ENCODE measurements at regions of chr2 and their contacts with region 1.

Region 1: DNA sequence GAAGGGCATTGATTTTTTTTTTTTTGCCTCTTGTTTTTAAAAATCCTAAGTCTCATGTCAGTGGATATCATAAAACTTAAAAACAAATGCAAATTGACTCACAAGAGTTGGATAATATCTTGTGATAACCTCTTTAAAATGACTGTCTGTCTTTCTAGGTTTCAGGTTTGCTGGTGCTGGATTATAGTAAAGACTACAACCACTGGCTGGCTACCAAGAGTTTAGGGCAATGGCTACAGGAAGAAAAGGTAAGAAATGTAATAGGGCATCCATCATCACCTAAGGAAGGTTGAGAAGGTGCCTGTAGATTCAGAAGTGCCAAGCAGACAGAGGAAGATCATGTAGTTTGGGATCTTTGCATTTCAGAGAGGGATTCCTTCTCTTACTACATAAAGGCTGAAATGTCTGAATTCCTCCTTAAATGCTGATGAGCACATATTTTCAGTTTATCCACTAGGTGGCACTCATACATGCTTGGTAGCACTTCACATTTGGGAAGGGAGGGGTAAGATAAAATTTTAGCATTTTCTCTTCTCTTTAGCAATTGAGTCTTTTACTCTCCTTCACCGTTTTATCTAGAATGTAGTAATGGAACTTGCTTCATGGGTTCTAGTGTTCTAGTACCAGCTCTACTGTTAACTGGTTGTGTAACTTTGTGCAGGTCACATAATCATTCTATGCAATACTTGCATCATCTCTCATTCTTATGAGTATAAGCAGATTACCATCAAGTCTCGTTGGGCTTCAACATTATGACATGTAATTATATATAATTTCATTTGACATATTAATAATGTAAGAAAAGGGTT is 21.1 kb downstream of the CPS1 start:
- DNase-seq: peak; percentile 1
- ATAC-seq: peak; percentile 93
- H3K4me3 ChIP-seq: no peak overlapping the region
- H3K27ac ChIP-seq: no peak overlapping the region
- H3K4me1 ChIP-seq: no peaks in the 10 kb centered on the region
- H3K27me3 ChIP-seq: no peaks in the 10 kb centered on the region
- CTCF ChIP-seq: peak; percentile 67 to 78 (median 75)
- EP300 ChIP-seq: no peak
- POLR2A ChIP-seq: no peak
- RAD21 ChIP-seq: peak; percentile 67

Region 2: GRCh38 chr2:209864716-209865295 is 712.7 kb before region 1 on chr2:
- CTCF ChIA-PET with region 1: no interaction called
- POLR2A ChIA-PET with region 1: no interaction called
- RAD21 ChIA-PET with region 1: no interaction called
- SMC1A ChIA-PET with region 1: no interaction called
- in situ Hi-C with region 1: no loop called
- intact Hi-C with region 1: no loop called
- DNase-seq: no peak
- ATAC-seq: no peak
- H3K4me3 ChIP-seq: no peak overlapping the region
- H3K27ac ChIP-seq: no peak overlapping the region
- H3K4me1 ChIP-seq: no peaks in the 10 kb centered on the region
- H3K27me3 ChIP-seq: no peaks in the 10 kb centered on the region
- CTCF ChIP-seq: no peak
- EP300 ChIP-seq: no peak
- POLR2A ChIP-seq: no peak
- RAD21 ChIP-seq: no peak

Region 3: DNA sequence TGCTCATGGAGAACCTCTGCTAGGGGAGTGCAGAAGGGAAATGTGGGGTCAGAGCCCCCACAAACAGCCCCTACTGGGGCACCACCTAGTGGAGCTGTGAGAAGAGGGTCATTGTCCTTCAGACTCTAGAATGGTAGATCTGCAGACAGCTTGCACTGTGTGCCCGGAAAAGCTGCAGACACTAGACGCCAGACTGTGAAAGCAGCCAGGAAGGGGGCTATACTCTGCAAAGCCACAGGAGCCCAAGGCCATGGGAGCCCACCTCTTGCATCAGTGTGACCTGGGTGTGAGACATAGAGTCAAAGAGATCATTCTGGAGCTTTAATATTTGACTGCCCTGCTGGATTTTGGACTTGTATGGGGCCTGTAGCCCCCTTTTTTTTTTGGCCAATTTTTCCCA is 514.2 kb before region 1 on chr2:
- CTCF ChIA-PET with region 1: no interaction called
- POLR2A ChIA-PET with region 1: no interaction called
- RAD21 ChIA-PET with region 1: no interaction called
- SMC1A ChIA-PET with region 1: no interaction called
- in situ Hi-C with region 1: no loop called
- intact Hi-C with region 1: no loop called
- DNase-seq: no peak
- ATAC-seq: no peak
- H3K4me3 ChIP-seq: no peak overlapping the region
- H3K27ac ChIP-seq: no peak overlapping the region
- H3K4me1 ChIP-seq: no peaks in the 10 kb centered on the region
- H3K27me3 ChIP-seq: no peaks in the 10 kb centered on the region
- CTCF ChIP-seq: no peak
- EP300 ChIP-seq: no peak
- POLR2A ChIP-seq: no peak
- RAD21 ChIP-seq: no peak

Region 4: GRCh38 chr2:210324458-210324857 is 253.0 kb before region 1 on chr2:
- CTCF ChIA-PET with region 1: no interaction called
- POLR2A ChIA-PET with region 1: no interaction called
- RAD21 ChIA-PET with region 1: no interaction called
- SMC1A ChIA-PET with region 1: no interaction called
- in situ Hi-C with region 1: no loop called
- intact Hi-C with region 1: no loop called
- DNase-seq: no peak
- ATAC-seq: no peak
- H3K4me3 ChIP-seq: no peak overlapping the region
- H3K27ac ChIP-seq: no peak overlapping the region
- H3K4me1 ChIP-seq: no peaks in the 10 kb centered on the region
- H3K27me3 ChIP-seq: no peaks in the 10 kb centered on the region
- CTCF ChIP-seq: no peak
- EP300 ChIP-seq: no peak
- POLR2A ChIP-seq: no peak
- RAD21 ChIP-seq: no peak

Region 5: GRCh38 chr2:210445116-210445707 is 132.3 kb before region 1 on chr2:
- CTCF ChIA-PET with region 1: interaction called, 4 read pairs
- POLR2A ChIA-PET with region 1: no interaction called
- RAD21 ChIA-PET with region 1: interaction called, 3 read pairs
- SMC1A ChIA-PET with region 1: interaction called, 5 read pairs
- in situ Hi-C with region 1: no loop called
- intact Hi-C with region 1: loop called (anchors 1 kb)
- DNase-seq: no peak
- ATAC-seq: peak; percentile 58
- H3K4me3 ChIP-seq: no peak overlapping the region
- H3K27ac ChIP-seq: no peak overlapping the region
- H3K4me1 ChIP-seq: peaks cover 5% of the 10 kb centered on the region
- H3K27me3 ChIP-seq: no peaks in the 10 kb centered on the region
- CTCF ChIP-seq: peak; percentile 52 to 62 (median 53)
- EP300 ChIP-seq: no peak
- POLR2A ChIP-seq: no peak
- RAD21 ChIP-seq: peak; percentile 64

Region 6: GRCh38 chr2:211157856-211158463 is 580.5 kb after region 1 on chr2:
- CTCF ChIA-PET with region 1: no interaction called
- POLR2A ChIA-PET with region 1: no interaction called
- RAD21 ChIA-PET with region 1: no interaction called
- SMC1A ChIA-PET with region 1: no interaction called
- in situ Hi-C with region 1: no loop called
- intact Hi-C with region 1: loop called (anchors 2 kb)
- DNase-seq: peak; percentile 4
- ATAC-seq: peak; percentile 98
- H3K4me3 ChIP-seq: no peak overlapping the region
- H3K27ac ChIP-seq: no peak overlapping the region
- H3K4me1 ChIP-seq: no peaks in the 10 kb centered on the region
- H3K27me3 ChIP-seq: no peaks in the 10 kb centered on the region
- CTCF ChIP-seq: peak; percentile 73 to 92 (median 79)
- EP300 ChIP-seq: no peak
- POLR2A ChIP-seq: no peak
- RAD21 ChIP-seq: peak; percentile 52

Region 7: DNA sequence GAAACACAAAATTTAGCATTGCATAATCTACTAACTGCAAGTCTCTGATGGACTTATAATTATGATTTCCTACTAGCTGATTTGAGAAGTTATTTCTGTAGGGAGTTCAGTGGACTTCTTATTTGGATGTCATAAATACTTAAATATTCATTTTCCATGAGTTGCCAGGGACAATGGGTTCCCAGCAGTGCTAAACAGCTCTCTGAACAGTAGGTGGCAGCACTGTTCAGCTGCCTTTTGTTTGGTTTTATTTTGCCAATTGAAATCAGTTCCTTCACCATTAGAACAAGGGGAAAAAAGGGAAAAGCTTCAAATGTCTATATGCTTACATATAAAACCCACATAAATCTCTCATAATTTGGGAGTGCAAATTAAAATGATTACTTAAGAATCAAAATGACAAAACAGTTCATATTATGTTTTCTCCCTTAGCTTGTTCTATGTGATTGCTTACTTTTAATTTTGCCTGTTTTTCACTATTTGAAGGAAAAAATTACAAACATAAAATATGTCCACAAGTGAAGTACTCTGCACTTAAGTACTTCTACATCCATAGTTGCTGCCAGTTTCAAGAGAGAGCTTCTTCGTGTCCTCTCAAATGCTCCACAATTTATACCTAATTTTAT is 877.9 kb after region 1 on chr2:
- CTCF ChIA-PET with region 1: no interaction called
- POLR2A ChIA-PET with region 1: no interaction called
- RAD21 ChIA-PET with region 1: no interaction called
- SMC1A ChIA-PET with region 1: no interaction called
- in situ Hi-C with region 1: no loop called
- intact Hi-C with region 1: no loop called
- DNase-seq: no peak
- ATAC-seq: peak; percentile 79
- H3K4me3 ChIP-seq: no peak overlapping the region
- H3K27ac ChIP-seq: no peak overlapping the region
- H3K4me1 ChIP-seq: no peaks in the 10 kb centered on the region
- H3K27me3 ChIP-seq: no peaks in the 10 kb centered on the region; a peak in 1 of 4 replicates
- CTCF ChIP-seq: peak; percentile 79 to 94 (median 84)
- EP300 ChIP-seq: no peak
- POLR2A ChIP-seq: no peak
- RAD21 ChIP-seq: peak; percentile 52